ENCODE measurements at regions of chr19 and their contacts with region 1.

Region 1: GRCh38 chr19:1082172-1082927 is 12.8 kb downstream of the POLR2E start:
- DNase-seq: peak; percentile 92
- H3K4me3 Mint-ChIP-seq: no peak overlapping the region
- H3K27ac Mint-ChIP-seq: peak overlapping the region; percentile 72
- H3K4me1 Mint-ChIP-seq: peaks cover 63% of the 10 kb centered on the region
- H3K27me3 Mint-ChIP-seq: no peaks in the 10 kb centered on the region

Region 2: GRCh38 chr19:1026189-1027019 is 55.9 kb before region 1 on chr19 and contains the start of gene CNN2:
- CTCF ChIA-PET with region 1: interaction called, 3 read pairs
- POLR2A ChIA-PET with region 1: interaction called, 50 read pairs
- DNase-seq: peak; percentile 78
- H3K4me3 Mint-ChIP-seq: peak within 1 kb of the TSS; percentile 97
- H3K27ac Mint-ChIP-seq: peak within 1 kb of the TSS; percentile 95
- H3K4me1 Mint-ChIP-seq: peaks cover 33% of the 10 kb centered on the region
- H3K27me3 Mint-ChIP-seq: no peaks in the 10 kb centered on the region
- total RNA-seq, gene CNN2: 513 to 519 TPM

Region 3: DNA sequence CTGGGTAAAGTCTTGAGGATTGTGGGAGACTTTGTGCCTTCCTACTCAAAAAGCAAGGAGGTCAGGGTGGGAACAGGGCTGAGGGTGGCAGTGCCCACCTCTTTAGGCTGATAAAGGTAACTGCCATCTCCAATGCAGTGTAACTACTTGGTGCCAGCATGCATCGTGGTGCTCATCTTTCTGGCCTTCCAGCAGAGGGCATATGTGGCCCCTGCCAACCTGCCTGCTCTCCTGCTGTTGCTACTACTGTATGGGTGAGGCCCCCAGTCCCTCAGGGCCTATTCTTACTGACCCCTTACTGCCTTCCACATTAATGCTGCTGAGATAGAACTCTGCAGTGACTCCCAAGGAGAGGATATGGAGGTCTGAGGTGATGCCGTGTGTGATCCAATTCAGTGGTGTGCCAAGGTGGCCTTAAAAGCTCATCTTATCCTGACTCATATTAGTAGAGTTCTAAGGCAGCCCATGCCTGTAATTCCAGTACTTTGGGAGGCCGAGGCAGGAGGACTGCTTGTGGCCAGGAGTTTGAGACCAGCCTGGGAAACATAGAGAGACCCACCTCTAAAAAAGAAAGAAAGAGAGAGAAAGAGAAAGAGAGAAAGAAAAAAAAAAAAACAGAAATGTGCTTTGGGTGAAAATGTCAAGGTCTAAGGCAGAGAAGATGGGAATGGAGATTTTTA is 25.0 kb before region 1 on chr19:
- CTCF ChIA-PET with region 1: interaction called, 4 read pairs
- POLR2A ChIA-PET with region 1: interaction called, 16 read pairs
- DNase-seq: peak; percentile 62
- H3K4me3 Mint-ChIP-seq: no peak overlapping the region
- H3K27ac Mint-ChIP-seq: peak overlapping the region; percentile 68
- H3K4me1 Mint-ChIP-seq: peaks cover 19% of the 10 kb centered on the region
- H3K27me3 Mint-ChIP-seq: no peaks in the 10 kb centered on the region

Region 4: GRCh38 chr19:1103708-1104310 is 21.5 kb after region 1 on chr19 and contains the start of gene GPX4:
- CTCF ChIA-PET with region 1: no interaction called
- POLR2A ChIA-PET with region 1: interaction called, 109 read pairs
- DNase-seq: peak; percentile 99
- H3K4me3 Mint-ChIP-seq: peak within 1 kb of the TSS; percentile 69
- H3K27ac Mint-ChIP-seq: peak within 1 kb of the TSS; percentile 89
- H3K4me1 Mint-ChIP-seq: peaks cover 47% of the 10 kb centered on the region
- H3K27me3 Mint-ChIP-seq: no peaks in the 10 kb centered on the region
- total RNA-seq, gene GPX4: 141 to 148 TPM

Region 5: DNA sequence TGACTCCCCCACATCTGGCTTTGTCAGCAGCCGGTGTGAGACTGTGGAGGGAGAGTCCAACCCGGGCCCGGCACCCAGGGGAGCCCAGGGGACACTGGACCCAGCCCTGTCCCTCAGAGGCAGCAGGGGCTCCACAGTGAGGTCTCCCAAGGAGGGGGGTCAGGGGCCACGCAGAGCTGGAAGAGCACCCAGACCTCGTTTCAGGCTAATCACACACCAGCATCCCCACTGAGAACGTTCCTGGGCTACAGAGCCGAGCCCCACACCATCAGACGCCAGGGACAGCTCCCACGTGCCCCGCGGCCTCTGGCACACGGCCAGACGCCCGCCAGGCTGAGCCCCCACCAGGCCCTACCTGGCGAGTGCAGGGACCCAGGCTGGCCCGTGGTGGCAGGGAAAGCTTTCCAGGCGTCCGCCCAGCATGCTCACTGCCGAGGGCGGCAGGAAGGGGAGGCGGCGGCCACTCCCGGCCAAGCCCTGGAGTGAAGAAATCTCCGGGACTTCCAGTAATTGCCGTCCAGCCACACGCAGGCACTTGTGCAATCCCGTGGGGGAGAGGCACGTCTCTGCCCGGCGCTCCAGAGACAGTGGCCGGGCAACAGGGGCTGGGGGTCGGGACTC is 72.5 kb after region 1 on chr19:
- CTCF ChIA-PET with region 1: no interaction called
- POLR2A ChIA-PET with region 1: no interaction called
- DNase-seq: no peak
- H3K4me3 Mint-ChIP-seq: no peak overlapping the region
- H3K27ac Mint-ChIP-seq: no peak overlapping the region
- H3K4me1 Mint-ChIP-seq: no peaks in the 10 kb centered on the region
- H3K27me3 Mint-ChIP-seq: no peaks in the 10 kb centered on the region

Measured in activated CD4-positive, alpha-beta memory T cell treated with anti-CD3 and anti-CD28 coated beads, Interleukin-2, amount 10 ng/mL, durations not matched to agents 7 days and 5 days (primary cell).